ENCODE measurements at regions of chr6 and their contacts with region 1.

Region 1: DNA sequence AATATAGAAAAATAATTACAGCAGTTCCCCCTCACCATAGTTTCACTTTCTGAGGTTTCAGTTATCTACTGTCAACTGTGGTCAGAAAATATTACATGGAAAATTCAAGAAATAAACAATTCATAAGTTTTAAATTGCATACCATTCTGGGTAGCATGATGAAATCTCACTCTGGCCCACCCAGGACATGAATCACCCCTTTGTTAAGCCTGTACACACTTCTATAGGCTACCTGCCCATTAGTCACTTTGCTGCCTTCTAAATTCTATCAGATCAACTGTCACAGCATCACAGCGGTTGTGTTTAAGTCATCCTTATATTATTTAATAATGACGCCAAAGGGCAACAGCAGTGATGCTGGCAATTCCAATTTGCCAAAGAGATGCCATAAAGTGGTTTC is 140.3 kb upstream of the RUNX2 start:
- DNase-seq: no peak
- H3K4me3 ChIP-seq: no peak overlapping the region
- H3K4me3 Mint-ChIP-seq: no peak overlapping the region
- H3K27ac Mint-ChIP-seq: no peak overlapping the region
- H3K4me1 ChIP-seq: no peaks in the 10 kb centered on the region
- H3K4me1 Mint-ChIP-seq: no peaks in the 10 kb centered on the region
- H3K27me3 ChIP-seq: no peaks in the 10 kb centered on the region
- H3K27me3 Mint-ChIP-seq: no peaks in the 10 kb centered on the region
- CTCF ChIP-seq: no peak

Region 2: DNA sequence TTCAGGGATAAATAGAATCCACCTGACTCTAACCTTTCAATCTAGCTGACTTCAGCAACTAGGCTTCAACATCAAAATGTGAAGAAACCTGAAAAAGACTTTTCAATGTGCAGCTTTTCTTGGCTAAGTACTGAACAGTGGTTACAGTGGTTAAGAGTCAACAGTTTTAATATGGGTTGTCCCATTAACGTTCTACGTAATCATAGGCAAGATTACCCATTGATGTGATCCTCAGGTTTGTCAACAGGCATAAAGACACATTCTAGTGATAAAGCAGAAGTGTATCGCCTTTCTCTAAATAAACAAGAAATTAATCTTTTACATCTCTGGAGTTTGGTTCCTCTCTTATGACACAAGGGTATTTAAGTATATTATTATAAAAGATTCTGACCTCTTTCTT is 13.8 kb before region 1 on chr6:
- CTCF ChIA-PET with region 1: no interaction called
- POLR2A ChIA-PET with region 1: no interaction called
- intact Hi-C with region 1: loop called (anchors 1 kb)
- DNase-seq: no peak
- H3K4me3 ChIP-seq: no peak overlapping the region
- H3K4me3 Mint-ChIP-seq: no peak overlapping the region
- H3K27ac Mint-ChIP-seq: no peak overlapping the region
- H3K4me1 ChIP-seq: peaks cover 8% of the 10 kb centered on the region; the same call in 1 of the 2 replicates
- H3K4me1 Mint-ChIP-seq: no peaks in the 10 kb centered on the region
- H3K27me3 ChIP-seq: no peaks in the 10 kb centered on the region
- H3K27me3 Mint-ChIP-seq: no peaks in the 10 kb centered on the region
- CTCF ChIP-seq: no peak